ENCODE measurements at regions of chr7 and their contacts with region 1.

Region 1: GRCh38 chr7:17937506-17938120 is 2.7 kb downstream of the SNX13 start:
- DNase-seq: no peak
- H3K4me3 ChIP-seq: peak overlapping the region; percentile 75; the same call in 1 of the 2 replicates
- H3K27ac ChIP-seq: no peak overlapping the region
- H3K27me3 ChIP-seq: no peaks in the 10 kb centered on the region
- CTCF ChIP-seq: no peak

Region 2: DNA sequence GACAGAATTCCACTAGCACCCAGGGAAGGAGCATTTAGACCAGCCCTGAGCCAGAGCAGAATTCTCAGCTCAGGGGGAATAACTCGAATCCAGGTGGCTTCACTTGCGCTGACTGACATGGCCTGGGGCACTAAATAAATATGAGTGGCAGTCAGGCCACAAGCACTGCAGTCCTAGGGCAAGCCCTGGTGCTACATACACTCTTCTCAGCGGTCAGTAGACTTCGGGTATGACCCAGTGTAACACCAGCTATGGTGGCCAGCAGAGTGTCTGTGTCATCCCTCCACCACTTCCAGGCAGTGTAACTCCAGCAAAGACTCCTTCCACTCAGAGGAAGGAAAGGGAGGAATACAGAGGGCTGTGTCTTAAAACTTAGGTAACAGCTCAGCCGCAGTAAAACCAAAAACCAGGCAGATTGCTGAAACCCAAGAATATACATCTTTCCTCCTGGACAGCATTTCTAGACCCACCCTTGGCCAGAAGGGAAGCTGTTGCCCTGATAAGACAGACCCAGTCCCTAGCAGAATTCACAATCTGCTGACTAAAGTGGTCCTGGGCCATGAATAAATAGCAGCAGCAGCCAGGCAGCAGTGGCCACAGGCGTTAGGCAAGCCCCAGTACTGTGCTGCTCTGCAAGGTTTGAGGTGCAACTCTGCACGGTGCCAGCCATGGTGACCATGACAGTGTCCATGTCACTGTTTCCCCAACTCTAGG is 74.4 kb before region 1 on chr7:
- CTCF ChIA-PET with region 1: no interaction called
- POLR2A ChIA-PET with region 1: interaction called, 11 read pairs
- DNase-seq: no peak
- H3K4me3 ChIP-seq: no peak overlapping the region
- H3K27ac ChIP-seq: no peak overlapping the region
- H3K27me3 ChIP-seq: no peaks in the 10 kb centered on the region
- CTCF ChIP-seq: no peak

Region 3: DNA sequence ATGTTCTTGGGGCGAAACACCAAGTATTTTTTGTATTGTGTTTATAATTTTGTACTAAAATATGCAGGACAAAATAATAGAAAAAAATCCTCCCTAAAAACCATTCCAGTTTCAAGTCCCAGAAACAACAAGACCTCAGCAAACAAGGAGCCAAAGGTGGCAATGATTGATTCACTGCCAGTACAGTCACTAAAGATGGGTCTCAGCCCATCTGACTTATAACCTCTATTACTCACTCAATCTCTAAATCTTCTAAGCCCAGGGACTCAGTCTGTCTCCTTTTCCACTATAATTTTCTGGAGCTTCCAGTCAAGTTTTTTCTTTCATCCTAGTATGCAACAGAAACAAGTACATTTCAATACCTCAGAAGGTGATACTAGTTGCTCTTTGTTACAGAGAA is 30.6 kb before region 1 on chr7:
- CTCF ChIA-PET with region 1: no interaction called
- POLR2A ChIA-PET with region 1: no interaction called
- DNase-seq: no peak
- H3K4me3 ChIP-seq: no peak overlapping the region
- H3K27ac ChIP-seq: no peak overlapping the region
- H3K27me3 ChIP-seq: no peaks in the 10 kb centered on the region
- CTCF ChIP-seq: no peak

Region 4: DNA sequence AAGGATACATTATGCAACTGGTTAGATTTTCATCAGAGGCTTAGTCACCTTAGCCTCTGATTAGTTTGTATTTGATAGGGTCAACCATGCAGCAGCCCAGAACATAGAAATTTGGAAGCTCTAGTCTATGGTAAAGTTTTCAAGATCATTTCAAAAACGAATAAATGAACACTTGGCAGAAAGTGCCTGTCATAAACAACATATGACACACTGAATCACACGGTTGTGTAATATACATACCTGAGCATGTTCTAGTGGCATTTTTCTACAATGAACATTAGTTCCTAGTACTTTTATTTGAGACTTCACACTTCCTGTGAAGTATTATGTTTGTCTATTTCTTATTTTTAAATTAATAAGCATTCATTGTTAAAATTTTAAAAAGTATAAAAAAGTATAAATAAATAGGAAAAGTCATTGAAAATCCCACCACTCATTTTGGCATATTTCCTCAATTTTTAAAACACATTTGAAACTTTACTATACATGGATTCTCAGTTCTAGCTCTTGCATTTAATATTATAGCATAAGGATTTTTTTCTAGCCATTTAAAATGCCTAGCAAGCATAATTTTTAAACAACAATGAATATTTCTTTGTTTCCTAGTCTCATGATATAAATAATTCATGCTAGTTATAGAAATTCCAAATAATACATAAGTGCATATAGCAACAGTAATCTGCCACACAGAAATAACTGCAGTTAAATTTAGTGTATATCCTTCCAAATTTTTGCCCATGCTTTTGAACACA is 115.7 kb after region 1 on chr7:
- CTCF ChIA-PET with region 1: no interaction called
- POLR2A ChIA-PET with region 1: no interaction called
- DNase-seq: no peak
- H3K4me3 ChIP-seq: no peak overlapping the region
- H3K27ac ChIP-seq: no peak overlapping the region
- H3K27me3 ChIP-seq: no peaks in the 10 kb centered on the region
- CTCF ChIP-seq: no peak